ENCODE measurements at regions of chrX and their contacts with region 1.

Region 1: GRCh38 chrX:24081661-24082264 is 27.0 kb downstream of the EIF2S3 start:
- DNase-seq: peak; percentile 74
- ATAC-seq: peak; percentile 59
- H3K4me3 Mint-ChIP-seq: no peak overlapping the region
- H3K27ac Mint-ChIP-seq: no peak overlapping the region
- H3K4me1 Mint-ChIP-seq: peaks cover 27% of the 10 kb centered on the region
- H3K27me3 Mint-ChIP-seq: no peaks in the 10 kb centered on the region

Region 2: GRCh38 chrX:24024819-24025740 is 56.7 kb before region 1 on chrX:
- CTCF ChIA-PET with region 1: no interaction called
- POLR2A ChIA-PET with region 1: no interaction called
- intact Hi-C with region 1: loop called in 1 of 2 experiments (anchors 2 kb)
- DNase-seq: peak; percentile 91
- ATAC-seq: peak; percentile 89
- H3K4me3 Mint-ChIP-seq: peak overlapping the region; percentile 83
- H3K27ac Mint-ChIP-seq: peak overlapping the region; percentile 58
- H3K4me1 Mint-ChIP-seq: peaks cover 19% of the 10 kb centered on the region
- H3K27me3 Mint-ChIP-seq: no peaks in the 10 kb centered on the region

Region 3: GRCh38 chrX:24150051-24150790 is 68.5 kb after region 1 on chrX:
- CTCF ChIA-PET with region 1: no interaction called
- POLR2A ChIA-PET with region 1: no interaction called
- intact Hi-C with region 1: loop called (anchors 1 to 2 kb)
- DNase-seq: peak; percentile 92
- ATAC-seq: peak; percentile 81
- H3K4me3 Mint-ChIP-seq: peak overlapping the region; percentile 93
- H3K27ac Mint-ChIP-seq: peak overlapping the region; percentile 97
- H3K4me1 Mint-ChIP-seq: peaks cover 50% of the 10 kb centered on the region
- H3K27me3 Mint-ChIP-seq: no peaks in the 10 kb centered on the region

Region 4: DNA sequence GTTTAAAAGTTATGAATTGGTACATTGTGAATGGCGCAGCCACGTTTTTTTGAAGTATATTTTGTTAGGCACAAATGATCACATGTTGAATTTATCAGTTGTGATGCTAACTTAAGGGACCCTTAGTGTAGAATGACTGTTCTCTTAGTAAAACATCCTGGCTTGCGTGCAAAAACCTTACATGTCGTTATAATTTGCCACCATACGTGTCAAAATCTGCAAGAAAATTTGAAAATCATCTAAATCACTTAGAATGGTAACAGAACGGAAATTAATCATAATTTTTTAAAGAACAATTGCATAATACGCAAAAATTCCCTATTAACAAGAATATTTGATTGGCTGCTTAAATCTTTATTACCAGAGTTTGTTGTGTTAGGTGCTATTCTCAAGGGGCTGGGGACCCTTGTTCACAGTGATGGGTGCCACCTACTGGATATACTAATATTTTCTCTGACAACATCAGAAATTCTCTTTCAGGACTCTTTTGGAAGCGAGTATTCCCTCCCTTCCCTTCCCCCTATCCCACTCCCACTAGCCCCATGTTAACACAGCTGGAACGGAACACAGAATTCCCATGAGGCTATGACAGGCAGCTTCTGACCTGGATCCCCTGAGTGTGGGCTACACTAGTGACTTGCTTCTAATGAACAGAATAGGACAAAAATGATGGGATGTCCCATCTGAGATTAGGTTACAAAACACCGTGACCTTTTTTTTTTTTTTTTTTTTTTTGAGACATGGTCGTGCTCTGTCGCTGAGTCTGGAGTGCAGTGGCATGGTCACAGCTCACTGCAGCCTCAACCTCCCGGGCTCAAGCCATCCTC is 160.3 kb after region 1 on chrX:
- CTCF ChIA-PET with region 1: no interaction called
- POLR2A ChIA-PET with region 1: no interaction called
- intact Hi-C with region 1: loop called (anchors 1 kb)
- DNase-seq: no peak
- ATAC-seq: no peak
- H3K4me3 Mint-ChIP-seq: no peak overlapping the region
- H3K27ac Mint-ChIP-seq: no peak overlapping the region
- H3K4me1 Mint-ChIP-seq: peaks cover 11% of the 10 kb centered on the region
- H3K27me3 Mint-ChIP-seq: no peaks in the 10 kb centered on the region

Region 5: DNA sequence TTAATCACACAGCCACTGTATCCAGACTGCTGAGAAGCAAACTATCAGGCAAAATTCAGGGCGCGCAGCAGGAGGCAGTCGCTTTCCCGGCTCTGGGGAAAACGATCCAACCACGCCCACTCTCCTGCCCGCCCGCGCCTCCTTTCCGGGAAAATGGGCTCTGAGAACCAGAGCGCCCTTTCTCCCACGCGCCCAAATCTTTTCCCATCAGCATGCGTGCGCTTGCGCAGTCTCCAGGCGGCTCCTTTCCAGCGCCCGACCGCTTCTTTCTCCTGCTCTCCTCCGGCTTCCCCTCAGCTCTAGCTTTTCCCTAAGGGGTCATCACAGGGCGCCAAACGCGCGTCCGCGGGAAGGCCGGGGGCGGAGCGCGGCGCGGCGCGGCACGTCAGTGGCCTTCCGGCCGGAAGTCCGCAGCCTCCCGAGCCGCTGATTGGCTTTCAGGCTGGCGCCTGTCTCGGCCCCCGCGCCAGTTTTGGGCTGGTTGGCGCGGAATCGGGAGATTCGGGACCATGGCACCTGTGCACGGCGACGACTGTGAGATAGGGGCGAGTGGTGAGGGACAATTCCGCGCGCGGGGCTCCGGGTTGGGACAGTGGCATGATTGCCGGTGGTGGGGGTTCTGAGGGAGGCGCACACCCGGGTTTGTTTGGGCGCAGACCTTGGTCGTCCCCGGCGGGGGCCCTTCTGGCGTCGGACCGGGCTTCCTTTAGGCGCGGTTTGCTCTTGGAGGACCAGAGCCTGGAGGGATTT is 611.9 kb after region 1 on chrX and contains the start of gene POLA1:
- CTCF ChIA-PET with region 1: no interaction called
- POLR2A ChIA-PET with region 1: no interaction called
- intact Hi-C with region 1: loop called in 1 of 2 experiments (anchors 10 kb)
- DNase-seq: peak; percentile 89
- ATAC-seq: peak; percentile 93
- H3K4me3 Mint-ChIP-seq: peak within 1 kb of the TSS; percentile 85
- H3K27ac Mint-ChIP-seq: peak within 1 kb of the TSS; percentile 88
- H3K4me1 Mint-ChIP-seq: peaks cover 24% of the 10 kb centered on the region
- H3K27me3 Mint-ChIP-seq: no peaks in the 10 kb centered on the region
- total RNA-seq, gene POLA1: 48.4 to 52.1 TPM